Stomach (tissue), 19 donors: ENCODE measurements at regions of chr10 and their contacts with region 1.

Region 1: GRCh38 chr10:68331455-68332258 is at the start of gene HNRNPH3:
- DNase-seq: peak; percentile 99 to 100
- H3K4me3 ChIP-seq: peak within 1 kb of the TSS; percentile 85 to 98 (median 94)
- H3K27ac ChIP-seq: peak within 1 kb of the TSS; percentile 93 to 100 (median 99)
- H3K4me1 ChIP-seq: peaks cover 29 to 66% (median 49%) of the 10 kb centered on the region in 4 donors
- H3K27me3 ChIP-seq: no peaks in the 10 kb centered on the region
- CTCF ChIP-seq: peak in 1 of 7 experiments; percentile 14
- EP300 ChIP-seq: no peak
- POLR2A ChIP-seq: peak in 2 of 4 donors; percentile 97 to 99
- total RNA-seq, gene HNRNPH3: 29.8 to 206 (median 65.2) TPM

Region 2: GRCh38 chr10:68074775-68075549 is 256.7 kb before region 1 on chr10 and contains the start of gene HERC4:
- intact Hi-C with region 1: loop called (anchors 10 kb)
- DNase-seq: peak; percentile 94 to 98
- H3K4me3 ChIP-seq: peak within 1 kb of the TSS; percentile 73 to 97 (median 88)
- H3K27ac ChIP-seq: peak within 1 kb of the TSS; percentile 91 to 99 (median 99)
- H3K4me1 ChIP-seq: peaks cover 11 to 41% (median 29%) of the 10 kb centered on the region in 4 donors
- H3K27me3 ChIP-seq: no peaks in the 10 kb centered on the region
- CTCF ChIP-seq: no peak
- EP300 ChIP-seq: no peak
- POLR2A ChIP-seq: peak in 2 of 4 donors; percentile 35
- total RNA-seq, gene HERC4: 5.8 to 116 (median 30.3) TPM